ENCODE measurements at regions of chr7 and their contacts with region 1.

Region 1: DNA sequence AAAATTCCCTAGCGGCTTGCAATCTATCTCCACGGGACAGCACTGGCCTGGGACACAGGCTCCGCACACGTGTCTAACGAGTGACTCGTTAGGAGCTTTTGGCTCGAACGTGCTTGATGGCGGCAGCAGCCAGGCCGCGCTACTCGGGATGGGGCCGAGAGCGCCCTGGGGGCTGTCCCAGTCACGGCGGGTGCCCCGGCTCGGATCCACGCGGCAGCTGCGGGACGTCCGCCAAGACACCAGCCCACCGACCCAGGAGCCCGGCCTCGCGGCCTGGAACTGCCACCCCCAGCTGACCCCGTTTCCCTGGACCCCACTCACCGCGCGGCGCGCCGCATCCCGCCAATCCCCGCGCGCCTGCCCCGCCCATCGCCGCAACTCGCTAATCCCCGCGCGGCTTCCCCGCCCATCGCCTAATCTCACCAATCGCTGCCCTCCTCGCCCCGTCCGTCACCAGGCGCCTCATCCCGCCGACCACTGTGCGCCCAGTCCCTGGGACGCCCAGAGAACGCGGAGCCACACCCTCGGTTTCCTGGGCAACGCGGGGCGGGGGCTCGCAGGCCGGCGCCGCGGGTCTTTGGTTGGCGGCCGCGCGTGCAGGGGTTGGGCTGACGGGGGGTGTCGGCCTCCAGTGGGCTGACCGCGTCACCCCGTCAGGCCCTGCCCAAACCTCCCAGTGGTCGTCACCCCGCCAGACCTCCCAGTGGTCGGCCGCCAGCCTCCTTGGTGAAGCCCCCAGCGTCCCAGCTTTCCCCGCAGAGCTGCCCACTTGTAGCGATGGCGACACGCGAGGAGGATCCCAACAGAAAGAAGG is at the start of gene POLD2:
- DNase-seq: peak; percentile 99
- H3K4me3 Mint-ChIP-seq: peak within 1 kb of the TSS; percentile 78
- H3K27ac Mint-ChIP-seq: peak within 1 kb of the TSS; percentile 59
- H3K4me1 Mint-ChIP-seq: peaks cover 36% of the 10 kb centered on the region
- H3K27me3 Mint-ChIP-seq: no peaks in the 10 kb centered on the region
- total RNA-seq, gene POLD2: 189 to 212 TPM

Region 2: GRCh38 chr7:43465581-43466554 is 657.5 kb before region 1 on chr7:
- CTCF ChIA-PET with region 1: no interaction called
- POLR2A ChIA-PET with region 1: no interaction called
- intact Hi-C with region 1: no loop called
- DNase-seq: no peak
- H3K4me3 Mint-ChIP-seq: no peak overlapping the region
- H3K27ac Mint-ChIP-seq: no peak overlapping the region
- H3K4me1 Mint-ChIP-seq: no peaks in the 10 kb centered on the region
- H3K27me3 Mint-ChIP-seq: peaks cover 12% of the 10 kb centered on the region

Region 3: DNA sequence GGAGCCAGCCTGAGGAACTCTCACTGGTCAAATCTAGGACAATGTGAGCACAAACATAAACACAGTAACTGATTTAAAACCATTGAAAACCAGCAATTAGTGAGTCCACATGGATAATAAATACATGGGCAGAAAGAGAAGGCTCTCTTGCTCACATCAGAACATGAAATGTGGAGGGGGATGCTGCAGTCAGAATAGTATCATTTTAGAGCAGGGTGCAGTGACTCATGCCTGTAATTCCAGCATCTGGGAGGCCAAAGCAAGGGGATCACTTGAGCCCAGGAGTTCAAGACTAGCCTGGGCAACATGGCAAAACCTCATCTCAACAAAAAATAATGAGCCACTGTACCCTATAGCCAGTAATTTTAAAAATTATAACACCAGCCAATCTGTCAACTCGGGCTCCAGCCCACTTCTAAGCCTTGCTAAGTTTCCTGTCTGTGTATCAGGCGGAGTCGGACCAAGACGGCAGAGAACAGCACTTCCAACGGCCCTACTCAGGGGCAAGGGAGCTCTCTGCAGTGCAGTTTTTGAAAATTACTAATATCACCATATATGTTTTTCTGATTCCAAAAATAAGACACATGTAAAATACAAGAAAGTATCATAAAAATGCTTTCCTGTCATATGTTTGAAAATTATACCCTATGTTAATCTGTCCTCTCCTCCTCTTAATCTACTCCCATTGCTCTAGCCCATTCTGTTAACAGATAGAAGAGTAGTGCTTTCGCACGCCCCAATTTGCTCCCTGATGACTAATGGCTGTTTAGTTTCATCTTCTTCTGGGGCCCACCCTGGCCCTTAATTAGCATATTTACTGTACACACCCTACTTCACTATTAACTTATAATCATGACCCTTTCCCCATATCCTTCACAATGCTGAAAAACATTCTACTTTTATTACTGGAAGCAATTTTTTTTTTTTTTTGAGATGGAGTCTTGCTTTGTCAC is 234.1 kb before region 1 on chr7:
- CTCF ChIA-PET with region 1: no interaction called
- POLR2A ChIA-PET with region 1: no interaction called
- intact Hi-C with region 1: no loop called
- DNase-seq: peak; percentile 21
- H3K4me3 Mint-ChIP-seq: no peak overlapping the region
- H3K27ac Mint-ChIP-seq: no peak overlapping the region
- H3K4me1 Mint-ChIP-seq: peaks cover 44% of the 10 kb centered on the region
- H3K27me3 Mint-ChIP-seq: no peaks in the 10 kb centered on the region

Region 4: GRCh38 chr7:44200647-44201461 is 77.5 kb after region 1 on chr7 and contains the start of gene YKT6:
- CTCF ChIA-PET with region 1: interaction called, 3 read pairs
- POLR2A ChIA-PET with region 1: no interaction called
- intact Hi-C with region 1: loop called (anchors 1 kb)
- DNase-seq: peak; percentile 97
- H3K4me3 Mint-ChIP-seq: peak within 1 kb of the TSS; percentile 83
- H3K27ac Mint-ChIP-seq: peak within 1 kb of the TSS; percentile 23
- H3K4me1 Mint-ChIP-seq: peaks cover 28% of the 10 kb centered on the region
- H3K27me3 Mint-ChIP-seq: peaks cover 9% of the 10 kb centered on the region
- total RNA-seq, gene YKT6: 57.0 to 60.4 TPM

Region 5: GRCh38 chr7:44284216-44284615 is 160.8 kb after region 1 on chr7:
- CTCF ChIA-PET with region 1: no interaction called
- POLR2A ChIA-PET with region 1: no interaction called
- intact Hi-C with region 1: no loop called
- DNase-seq: peak; percentile 4
- H3K4me3 Mint-ChIP-seq: no peak overlapping the region
- H3K27ac Mint-ChIP-seq: no peak overlapping the region
- H3K4me1 Mint-ChIP-seq: no peaks in the 10 kb centered on the region
- H3K27me3 Mint-ChIP-seq: no peaks in the 10 kb centered on the region

Measured in activated CD4-positive, alpha-beta memory T cell treated with anti-CD3 and anti-CD28 coated beads for 36 hours (primary cell).